ENCODE measurements at regions of chr17 and their contacts with region 1.

Region 1: DNA sequence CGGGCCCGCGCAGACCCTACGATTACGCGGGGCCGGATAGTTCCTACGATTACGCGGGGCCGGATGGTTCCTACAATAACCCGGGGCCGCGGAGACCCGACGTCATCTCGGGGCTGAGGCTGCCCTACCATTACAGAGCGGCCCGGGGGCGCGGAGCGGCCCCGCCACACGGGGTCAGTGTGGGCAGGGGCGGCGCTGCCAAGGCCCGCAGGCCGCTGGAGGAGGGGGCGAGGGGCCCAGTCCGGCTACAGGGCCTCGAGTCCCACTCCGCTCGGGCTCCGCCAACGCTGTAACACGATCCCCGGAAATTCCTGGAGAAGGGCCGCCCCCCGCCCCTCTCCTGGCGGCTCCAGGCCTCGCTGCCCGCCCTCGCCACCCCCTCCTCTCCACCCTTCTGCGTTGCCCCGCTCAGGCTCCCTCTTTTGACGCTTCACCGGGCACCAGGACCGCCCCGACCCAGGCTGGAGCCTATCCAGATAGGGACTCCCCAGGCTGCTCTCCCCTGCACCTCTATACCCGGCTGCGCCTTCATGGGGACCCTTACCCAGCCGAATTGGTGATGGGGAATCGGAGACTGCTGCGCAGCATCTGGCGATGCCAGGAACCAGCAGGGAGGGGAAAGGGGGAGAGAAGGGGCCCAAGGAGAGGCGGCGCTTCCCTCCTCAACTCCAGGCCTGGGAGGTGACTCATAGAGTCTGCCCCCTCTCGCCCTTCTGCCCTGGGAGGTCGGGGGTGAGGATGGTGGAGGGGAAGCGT is at the start of gene RAB34:
- DNase-seq: peak; percentile 46
- ATAC-seq: peak; percentile 14
- H3K4me3 Mint-ChIP-seq: peak within 1 kb of the TSS; percentile 79
- H3K27ac Mint-ChIP-seq: peak within 1 kb of the TSS; percentile 85
- H3K4me1 Mint-ChIP-seq: peaks cover 49% of the 10 kb centered on the region
- H3K27me3 Mint-ChIP-seq: no peaks in the 10 kb centered on the region
- CTCF ChIP-seq: no peak
- total RNA-seq, gene RAB34: 21.3 and 23.9 TPM in 2 replicates

Region 2: DNA sequence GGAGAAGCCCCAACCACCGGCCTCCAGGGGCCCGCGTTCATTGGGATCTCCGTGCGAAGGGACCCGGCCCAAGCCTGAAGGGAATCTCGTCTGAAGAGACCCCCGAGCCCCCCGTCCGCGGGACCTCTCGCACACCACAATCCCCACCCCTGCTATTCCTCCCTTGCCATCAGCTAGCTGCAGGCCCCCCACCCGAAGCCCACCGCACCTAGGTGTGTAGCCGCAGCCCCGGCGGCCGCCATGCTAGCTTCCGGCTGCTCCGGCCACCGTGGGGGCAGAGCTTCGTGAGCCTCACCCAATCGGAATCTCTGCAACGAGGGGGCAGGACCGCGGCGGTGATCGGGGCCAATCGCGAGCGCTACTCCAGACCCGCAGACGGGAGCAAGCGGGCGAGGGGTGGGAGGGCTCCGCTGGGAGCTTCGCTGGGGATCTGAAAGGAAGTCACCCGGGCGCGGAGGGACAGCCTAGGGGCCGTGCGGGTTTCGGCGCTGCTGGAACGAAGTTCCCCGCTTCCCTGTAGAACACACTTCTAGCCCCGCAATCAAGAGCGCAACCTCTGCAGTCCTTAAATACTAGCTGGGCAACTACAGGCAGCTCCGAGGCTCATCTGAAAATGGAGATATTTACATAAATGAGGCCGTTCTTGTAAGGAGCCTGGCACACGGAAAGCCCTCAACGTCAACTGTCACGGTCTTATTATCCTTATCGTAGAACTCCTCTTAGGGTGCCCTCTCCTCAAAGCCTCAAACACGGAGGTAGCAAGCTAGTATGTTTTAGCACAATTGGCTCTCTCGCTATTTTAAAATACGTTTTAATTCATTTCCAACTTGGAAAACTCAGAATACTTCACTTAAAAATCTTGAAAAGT is 146.3 kb before region 1 on chr17 and contains the start of gene PIGS:
- CTCF ChIA-PET with region 1: no interaction called
- POLR2A ChIA-PET with region 1: interaction called, 10 read pairs
- intact Hi-C with region 1: no loop called
- DNase-seq: peak; percentile 84
- ATAC-seq: peak; percentile 94
- H3K4me3 Mint-ChIP-seq: peak within 1 kb of the TSS; percentile 95
- H3K27ac Mint-ChIP-seq: peak within 1 kb of the TSS; percentile 87
- H3K4me1 Mint-ChIP-seq: peaks cover 62% of the 10 kb centered on the region
- H3K27me3 Mint-ChIP-seq: no peaks in the 10 kb centered on the region
- CTCF ChIP-seq: no peak
- total RNA-seq, gene PIGS: 86.4 and 92.2 TPM in 2 replicates

Region 3: GRCh38 chr17:28634206-28634856 is 83.4 kb before region 1 on chr17:
- CTCF ChIA-PET with region 1: no interaction called
- POLR2A ChIA-PET with region 1: no interaction called
- intact Hi-C with region 1: no loop called
- DNase-seq: no peak
- ATAC-seq: no peak
- H3K4me3 Mint-ChIP-seq: no peak overlapping the region
- H3K27ac Mint-ChIP-seq: no peak overlapping the region
- H3K4me1 Mint-ChIP-seq: no peaks in the 10 kb centered on the region
- H3K27me3 Mint-ChIP-seq: no peaks in the 10 kb centered on the region
- CTCF ChIP-seq: no peak

Region 4: DNA sequence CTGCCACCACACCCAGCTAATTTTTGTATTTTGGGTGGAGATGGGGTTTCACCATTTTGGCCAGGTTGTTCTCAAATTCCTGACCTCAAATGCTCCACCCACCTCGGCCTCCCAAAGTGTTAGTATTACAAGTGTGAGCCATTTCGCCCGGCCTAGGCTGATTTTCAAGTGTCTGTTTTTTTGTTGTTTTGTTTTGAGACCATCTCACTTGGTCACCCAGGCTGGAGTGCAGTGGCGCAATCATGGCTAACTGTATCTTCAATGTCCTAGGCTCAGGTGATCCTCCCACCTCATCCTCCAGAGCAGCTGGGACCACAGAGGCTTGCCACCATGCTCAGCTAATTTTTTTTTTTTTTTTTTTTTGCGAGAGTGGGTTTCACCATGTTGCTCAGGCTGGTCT is 14.9 kb after region 1 on chr17:
- CTCF ChIA-PET with region 1: interaction called, 3 read pairs
- POLR2A ChIA-PET with region 1: interaction called, 2,384 read pairs
- intact Hi-C with region 1: loop called (anchors 1 kb)
- DNase-seq: no peak
- ATAC-seq: no peak
- H3K4me3 Mint-ChIP-seq: no peak overlapping the region
- H3K27ac Mint-ChIP-seq: peak overlapping the region; percentile 81
- H3K4me1 Mint-ChIP-seq: peaks cover 75% of the 10 kb centered on the region
- H3K27me3 Mint-ChIP-seq: no peaks in the 10 kb centered on the region
- CTCF ChIP-seq: no peak

Region 5: GRCh38 chr17:28750178-28751047 is 32.7 kb after region 1 on chr17:
- CTCF ChIA-PET with region 1: interaction called, 18 read pairs
- POLR2A ChIA-PET with region 1: interaction called, 2,384 read pairs
- intact Hi-C with region 1: loop called (anchors 5 kb)
- DNase-seq: peak; percentile 82
- ATAC-seq: peak; percentile 84
- H3K4me3 Mint-ChIP-seq: peak overlapping the region; percentile 75
- H3K27ac Mint-ChIP-seq: peak overlapping the region; percentile 74
- H3K4me1 Mint-ChIP-seq: peaks cover 51% of the 10 kb centered on the region
- H3K27me3 Mint-ChIP-seq: no peaks in the 10 kb centered on the region
- CTCF ChIP-seq: peak; percentile 95

Region 6: GRCh38 chr17:28788100-28788499 is 70.3 kb after region 1 on chr17:
- CTCF ChIA-PET with region 1: no interaction called
- POLR2A ChIA-PET with region 1: no interaction called
- intact Hi-C with region 1: no loop called
- DNase-seq: no peak
- ATAC-seq: no peak
- H3K4me3 Mint-ChIP-seq: no peak overlapping the region
- H3K27ac Mint-ChIP-seq: no peak overlapping the region
- H3K4me1 Mint-ChIP-seq: no peaks in the 10 kb centered on the region
- H3K27me3 Mint-ChIP-seq: no peaks in the 10 kb centered on the region
- CTCF ChIP-seq: no peak

Region 7: DNA sequence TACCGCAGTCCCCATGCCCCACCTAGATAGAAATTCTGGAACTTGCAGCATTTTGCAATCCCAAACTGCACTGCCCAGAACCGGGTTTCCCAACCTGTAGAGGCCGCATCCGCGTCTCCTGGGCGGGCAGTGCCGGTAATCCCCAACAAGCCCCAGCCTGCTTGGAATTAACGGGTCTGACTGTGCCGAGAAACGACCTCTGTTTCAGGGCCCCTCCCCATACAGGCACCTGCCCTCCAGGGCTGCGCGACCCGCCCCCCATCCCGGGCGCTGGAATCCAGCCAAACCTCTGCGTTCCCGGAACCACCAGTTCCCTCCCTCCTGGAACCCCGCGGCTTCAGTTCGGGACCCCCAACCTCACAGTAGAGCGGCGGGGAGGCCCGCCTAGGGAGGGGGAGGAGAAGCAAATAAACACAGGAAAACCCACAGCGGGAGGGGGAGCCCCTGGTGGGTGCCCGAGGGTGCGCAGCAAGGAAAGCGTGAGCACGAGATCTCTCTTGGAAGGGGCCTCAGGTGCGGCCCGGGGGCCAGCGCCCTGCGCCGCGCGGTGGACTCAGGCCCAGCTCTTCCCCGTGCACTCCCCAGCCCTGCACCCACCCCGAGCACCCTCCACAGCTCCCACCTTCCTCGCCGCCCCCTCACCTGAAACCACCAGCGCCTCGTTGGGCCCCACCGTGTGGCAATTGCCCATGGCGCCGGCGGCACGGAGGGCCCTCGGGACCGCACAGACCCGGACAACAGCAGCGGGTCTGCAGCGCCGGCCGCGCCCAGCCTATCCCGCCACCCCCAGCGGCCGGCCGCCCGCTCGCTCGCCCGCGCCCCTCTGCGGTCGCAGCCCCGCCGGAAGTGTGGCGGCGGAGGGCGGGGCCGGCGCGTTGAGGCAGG is 179.4 kb after region 1 on chr17 and contains the start of gene FLOT2:
- CTCF ChIA-PET with region 1: interaction called, 3 read pairs
- POLR2A ChIA-PET with region 1: interaction called, 21 read pairs
- intact Hi-C with region 1: loop called (anchors 2 kb)
- DNase-seq: peak; percentile 66
- ATAC-seq: peak; percentile 58
- H3K4me3 Mint-ChIP-seq: peak within 1 kb of the TSS; percentile 96
- H3K27ac Mint-ChIP-seq: peak within 1 kb of the TSS; percentile 86
- H3K4me1 Mint-ChIP-seq: peaks cover 81% of the 10 kb centered on the region
- H3K27me3 Mint-ChIP-seq: no peaks in the 10 kb centered on the region
- CTCF ChIP-seq: no peak
- total RNA-seq, gene FLOT2: 303 and 321 TPM in 2 replicates